Activated T-helper 1 cell treated with anti-CD3 and anti-CD28 coated beads, Interleukin-12 subunit alpha, Interleukin-12 subunit beta, Interleukin-2, Interleukin-4 antibody, amounts not matched to agents 30 ng/mL and 10 ng/mL and 1 ng/mL, durations not matched to agents 14 hours and 24 hours and 36 hours (primary cell): ENCODE measurements at regions of chr2 and their contacts with region 1.

Region 1: DNA sequence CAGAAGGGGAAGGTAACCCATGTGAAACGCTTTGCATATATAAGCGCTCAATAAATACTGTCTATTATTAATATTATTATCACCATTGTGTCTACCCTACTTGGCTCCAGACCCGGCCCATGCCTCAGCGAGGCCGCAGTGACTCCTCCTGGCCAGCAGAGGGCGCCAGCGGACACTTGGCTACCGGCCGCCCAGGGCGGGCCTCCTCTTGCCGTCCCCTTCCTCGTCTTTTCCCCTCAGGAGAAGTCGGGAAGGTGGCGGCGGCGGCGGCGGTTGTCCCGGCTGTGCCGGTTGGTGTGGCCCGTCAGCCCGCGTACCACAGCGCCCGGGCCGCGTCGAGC is at the start of gene AGFG1:
- DNase-seq: peak; percentile 78
- H3K4me3 Mint-ChIP-seq: peak within 1 kb of the TSS; percentile 88
- H3K27ac Mint-ChIP-seq: peak within 1 kb of the TSS; percentile 86
- H3K4me1 Mint-ChIP-seq: peaks cover 56% of the 10 kb centered on the region
- H3K27me3 Mint-ChIP-seq: no peaks in the 10 kb centered on the region
- total RNA-seq, gene AGFG1: 239 and 252 TPM in 2 replicates

Region 2: DNA sequence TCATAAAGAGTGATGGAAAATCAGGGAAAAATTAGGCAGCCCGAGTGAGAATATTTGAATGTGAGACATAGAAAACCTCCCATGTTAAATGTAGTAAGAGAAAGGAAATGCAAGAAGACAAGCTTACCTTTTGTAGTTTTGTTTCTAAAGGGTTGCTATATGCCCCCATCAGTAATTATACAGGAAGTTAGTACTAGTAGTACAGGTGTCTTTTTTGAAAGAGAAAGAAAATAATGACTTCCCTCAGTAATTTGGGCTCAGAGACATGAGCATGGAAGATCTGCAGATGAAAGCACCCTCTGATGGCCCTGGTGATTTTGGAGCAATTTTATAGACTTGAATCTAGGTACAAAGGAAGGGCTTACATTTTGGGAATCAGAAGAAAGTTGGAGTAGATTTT is 555.2 kb before region 1 on chr2:
- intact Hi-C with region 1: no loop called
- DNase-seq: no peak
- H3K4me3 Mint-ChIP-seq: no peak overlapping the region
- H3K27ac Mint-ChIP-seq: no peak overlapping the region
- H3K4me1 Mint-ChIP-seq: peaks cover 6% of the 10 kb centered on the region
- H3K27me3 Mint-ChIP-seq: peaks cover 2% of the 10 kb centered on the region

Region 3: DNA sequence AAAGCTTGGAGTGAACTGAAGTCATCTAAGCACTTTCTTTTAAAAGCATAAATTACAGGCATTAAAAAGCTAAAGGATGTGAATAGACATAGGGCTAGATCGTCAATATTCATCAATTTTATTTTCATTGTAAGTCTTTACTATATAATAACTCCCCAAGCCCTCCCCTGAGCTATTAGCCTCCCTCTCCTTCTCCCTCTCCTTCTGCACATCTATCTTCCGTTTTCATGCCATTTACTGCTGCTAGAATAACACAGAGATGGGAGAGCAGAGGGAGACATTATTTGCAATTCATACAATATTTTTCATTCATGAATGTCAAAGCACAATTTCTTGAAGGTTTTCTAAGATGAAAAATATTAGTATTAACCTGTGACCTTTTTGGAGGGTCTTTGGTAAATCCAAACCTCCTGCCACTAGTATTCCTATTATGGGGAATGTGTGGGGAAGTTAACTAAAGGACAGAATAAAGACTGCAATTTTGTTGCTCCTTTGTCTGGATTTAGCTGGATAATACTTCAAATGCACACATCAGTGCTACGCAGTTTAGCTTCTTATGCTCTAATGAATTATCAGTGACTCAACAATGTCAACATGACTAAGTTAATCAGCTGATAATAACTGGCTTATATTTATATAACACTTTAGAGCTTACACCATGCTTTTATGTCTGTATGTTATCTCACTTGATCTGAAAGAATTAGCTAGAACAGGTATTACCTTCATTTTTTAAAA is 175.1 kb before region 1 on chr2:
- intact Hi-C with region 1: no loop called
- DNase-seq: no peak
- H3K4me3 Mint-ChIP-seq: no peak overlapping the region
- H3K27ac Mint-ChIP-seq: no peak overlapping the region
- H3K4me1 Mint-ChIP-seq: peaks cover 4% of the 10 kb centered on the region
- H3K27me3 Mint-ChIP-seq: no peaks in the 10 kb centered on the region

Region 4: GRCh38 chr2:227488045-227488444 is 16.2 kb after region 1 on chr2:
- intact Hi-C with region 1: loop called (anchors 1 kb)
- DNase-seq: no peak
- H3K4me3 Mint-ChIP-seq: peak overlapping the region; percentile 15
- H3K27ac Mint-ChIP-seq: peak overlapping the region; percentile 64
- H3K4me1 Mint-ChIP-seq: peaks cover 28% of the 10 kb centered on the region
- H3K27me3 Mint-ChIP-seq: no peaks in the 10 kb centered on the region

Region 5: DNA sequence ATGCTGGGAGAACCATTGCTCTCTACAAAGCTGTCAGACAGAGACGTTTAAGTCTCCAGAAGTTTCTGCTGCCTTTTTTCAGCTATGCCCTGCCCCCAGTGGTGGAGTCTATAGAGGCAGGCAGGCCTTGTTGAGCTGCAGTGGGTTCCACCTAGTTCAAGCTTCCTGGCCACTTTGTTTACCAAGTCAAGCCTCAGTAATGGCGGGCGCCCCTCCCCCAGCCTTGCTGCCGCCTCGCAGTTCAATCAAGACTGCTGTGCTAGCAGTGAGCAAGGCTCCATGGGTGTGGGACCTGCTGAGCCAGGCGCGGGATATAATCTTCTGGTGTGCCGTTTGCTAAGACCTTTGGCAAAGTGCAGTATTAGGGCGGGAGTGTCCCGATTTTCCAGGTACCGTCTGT is 74.1 kb after region 1 on chr2:
- intact Hi-C with region 1: loop called (anchors 5 kb)
- DNase-seq: no peak
- H3K4me3 Mint-ChIP-seq: no peak overlapping the region
- H3K27ac Mint-ChIP-seq: no peak overlapping the region
- H3K4me1 Mint-ChIP-seq: peaks cover 26% of the 10 kb centered on the region
- H3K27me3 Mint-ChIP-seq: no peaks in the 10 kb centered on the region

Region 6: DNA sequence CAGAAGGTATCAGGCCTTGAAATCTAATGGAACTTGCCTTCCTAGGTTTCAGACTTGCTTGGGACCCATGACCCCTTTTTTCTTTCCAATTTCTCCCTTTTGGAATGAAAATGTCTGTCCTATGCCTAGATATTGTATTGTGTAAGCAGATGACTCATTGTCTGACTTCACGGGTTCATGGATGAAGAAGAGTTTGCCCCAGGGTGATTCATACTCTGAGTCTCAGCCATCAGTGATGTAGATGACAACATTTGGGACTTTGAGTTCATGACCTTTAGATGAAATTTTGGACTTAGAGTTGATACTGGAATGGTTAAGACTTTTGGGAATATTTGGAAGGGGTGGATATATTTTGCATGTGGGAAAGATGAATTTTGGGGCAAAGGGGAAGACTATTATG is 183.6 kb after region 1 on chr2:
- intact Hi-C with region 1: loop called (anchors 5 kb)
- DNase-seq: no peak
- H3K4me3 Mint-ChIP-seq: no peak overlapping the region
- H3K27ac Mint-ChIP-seq: no peak overlapping the region
- H3K4me1 Mint-ChIP-seq: no peaks in the 10 kb centered on the region
- H3K27me3 Mint-ChIP-seq: peaks cover 3% of the 10 kb centered on the region